ENCODE measurements at regions of chr5 and their contacts with region 1.

Region 1: GRCh38 chr5:135651150-135651549 is 72.4 kb upstream of the CXCL14 start:
- DNase-seq: no peak
- ATAC-seq: no peak
- H3K4me3 ChIP-seq: no peak overlapping the region
- H3K27ac ChIP-seq: no peak overlapping the region
- H3K4me1 ChIP-seq: no peaks in the 10 kb centered on the region
- H3K27me3 ChIP-seq: peaks cover 0 to 6% (median 0%) of the 10 kb centered on the region in 7 donors
- CTCF ChIP-seq: no peak

Region 2: DNA sequence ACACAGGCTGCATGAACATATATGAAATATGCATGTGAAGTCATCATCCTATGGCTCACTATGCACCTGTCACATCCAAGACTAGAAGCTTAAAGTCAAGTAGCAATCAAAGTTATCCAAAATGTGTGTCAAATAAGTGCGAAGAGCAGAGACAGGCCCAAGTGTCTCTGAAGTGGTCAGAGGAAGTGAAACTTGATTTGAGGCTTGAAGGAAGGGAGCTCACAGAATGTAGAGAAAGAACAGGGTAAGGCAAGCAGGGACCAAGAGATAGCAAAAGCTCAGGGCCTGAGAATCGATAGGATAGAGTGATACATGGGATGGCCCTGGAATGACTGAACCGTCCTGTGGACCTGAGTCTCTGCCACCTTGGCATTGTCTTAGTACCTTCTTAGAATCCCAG is 988.5 kb after region 1 on chr5:
- intact Hi-C with region 1: loop called in 1 of 10 experiments (anchors 10 kb)
- DNase-seq: no peak
- ATAC-seq: no peak
- H3K4me3 ChIP-seq: no peak overlapping the region
- H3K27ac ChIP-seq: no peak overlapping the region
- H3K4me1 ChIP-seq: no peaks in the 10 kb centered on the region
- H3K27me3 ChIP-seq: peaks cover 0 to 21% (median 0%) of the 10 kb centered on the region in 7 donors
- CTCF ChIP-seq: no peak

Measured in heart right ventricle (tissue), 16 donors.